HepG2 (cell line): ENCODE measurements at regions of chr5 and their contacts with region 1.

Region 1: GRCh38 chr5:170633235-170634081 is 129.6 kb downstream of the KCNIP1 start:
- DNase-seq: peak; percentile 27
- ATAC-seq: peak; percentile 14; the same call in 2 of the 3 replicates
- H3K4me3 ChIP-seq: no peak overlapping the region
- H3K27ac ChIP-seq: no peak overlapping the region
- H3K4me1 ChIP-seq: peaks cover 11% of the 10 kb centered on the region; the same call in 1 of the 2 replicates
- H3K27me3 ChIP-seq: peaks cover 2 to 4% of the 10 kb centered on the region in 2 experiments; a peak in 2 of 5 replicates
- CTCF ChIP-seq: no peak
- EP300 ChIP-seq: no peak
- POLR2A ChIP-seq: no peak
- RAD21 ChIP-seq: no peak

Region 2: GRCh38 chr5:170434966-170435605 is 198.4 kb before region 1 on chr5:
- CTCF ChIA-PET with region 1: interaction called, 12 read pairs
- POLR2A ChIA-PET with region 1: no interaction called
- in situ Hi-C with region 1: no loop called
- intact Hi-C with region 1: no loop called
- DNase-seq: peak; percentile 11
- ATAC-seq: peak; percentile 92
- H3K4me3 ChIP-seq: no peak overlapping the region
- H3K27ac ChIP-seq: no peak overlapping the region
- H3K4me1 ChIP-seq: no peaks in the 10 kb centered on the region
- H3K27me3 ChIP-seq: peaks cover 0 to 37% of the 10 kb centered on the region in 2 experiments; a peak in 4 of 5 replicates
- CTCF ChIP-seq: peak; percentile 87
- EP300 ChIP-seq: no peak
- POLR2A ChIP-seq: no peak
- RAD21 ChIP-seq: peak; percentile 71

Region 3: DNA sequence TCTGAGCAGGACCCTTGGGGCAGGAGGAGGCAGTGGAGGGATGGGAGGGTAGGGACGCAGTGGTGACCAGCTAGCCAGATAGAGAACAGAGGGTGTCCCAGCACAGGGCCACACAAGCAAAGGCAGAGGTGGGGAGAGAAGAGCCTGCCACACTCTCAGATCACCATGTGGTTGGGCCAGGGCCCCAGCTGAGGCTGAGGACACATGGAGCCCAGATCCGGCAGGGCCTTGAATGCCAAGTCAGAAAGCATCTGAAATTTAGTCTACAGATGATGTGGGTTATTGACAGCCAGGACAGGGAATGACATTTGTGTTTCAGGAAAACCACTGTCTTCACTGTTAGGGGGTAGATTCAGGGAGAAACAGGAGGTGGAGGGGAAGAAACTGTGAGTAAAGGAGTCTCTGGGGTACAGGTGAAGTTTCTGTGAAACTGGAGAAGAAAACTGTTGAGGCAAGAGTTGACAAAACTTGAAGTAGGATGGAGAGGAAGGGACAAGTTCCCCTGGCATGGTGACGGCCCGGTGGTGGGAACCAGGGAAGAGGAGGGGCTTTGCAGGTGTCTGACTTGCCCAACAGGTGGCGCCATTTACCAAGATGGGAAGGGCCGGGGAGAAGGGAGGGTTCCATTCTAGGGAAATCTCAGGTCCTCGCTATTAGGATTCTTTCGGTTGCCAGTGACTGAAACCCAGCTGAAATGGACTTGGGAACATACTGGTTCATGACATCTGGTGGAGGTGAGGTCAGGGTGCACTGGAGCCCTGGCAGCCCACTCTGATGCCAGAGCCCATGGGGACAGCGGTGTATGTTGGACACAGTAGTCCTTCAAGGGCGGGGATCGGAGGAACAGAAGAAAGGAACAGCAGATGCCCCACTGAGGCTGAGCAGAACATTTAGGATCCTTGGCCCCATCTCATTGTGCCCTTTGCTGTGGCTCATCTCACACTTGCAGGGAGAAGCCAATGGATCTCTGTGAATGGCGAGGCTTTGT is 29.6 kb before region 1 on chr5:
- CTCF ChIA-PET with region 1: interaction called, 9 read pairs
- POLR2A ChIA-PET with region 1: no interaction called
- in situ Hi-C with region 1: no loop called
- intact Hi-C with region 1: loop called (anchors 1 kb)
- DNase-seq: peak; percentile 46
- ATAC-seq: peak; percentile 91
- H3K4me3 ChIP-seq: no peak overlapping the region
- H3K27ac ChIP-seq: no peak overlapping the region
- H3K4me1 ChIP-seq: no peaks in the 10 kb centered on the region
- H3K27me3 ChIP-seq: peaks cover 3 to 49% of the 10 kb centered on the region in 2 experiments; a peak in 4 of 5 replicates
- CTCF ChIP-seq: peak; percentile 65
- EP300 ChIP-seq: no peak
- POLR2A ChIP-seq: no peak
- RAD21 ChIP-seq: no peak

Region 4: DNA sequence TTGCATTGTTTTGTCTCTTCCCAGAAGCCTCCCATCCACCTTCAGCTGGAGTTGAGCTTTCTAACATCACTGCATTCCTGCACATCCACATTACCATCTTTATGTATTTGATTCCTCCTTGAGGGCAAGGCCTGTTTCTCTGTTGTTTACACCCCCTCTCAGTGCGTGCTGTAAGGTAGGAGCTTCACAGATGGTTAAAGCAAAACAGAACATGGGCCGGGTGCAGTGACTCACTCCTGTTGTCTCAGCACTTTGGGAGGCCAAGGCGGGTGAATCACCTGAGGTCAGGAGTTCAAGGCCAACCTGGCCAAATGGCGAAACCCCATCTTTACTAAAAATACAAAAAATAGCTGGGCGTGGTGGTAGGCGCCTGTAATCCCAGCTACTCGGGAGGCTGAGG is 18.7 kb before region 1 on chr5:
- CTCF ChIA-PET with region 1: no interaction called
- POLR2A ChIA-PET with region 1: no interaction called
- in situ Hi-C with region 1: no loop called
- intact Hi-C with region 1: loop called (anchors 1 kb)
- DNase-seq: peak; percentile 25
- ATAC-seq: no peak
- H3K4me3 ChIP-seq: no peak overlapping the region
- H3K27ac ChIP-seq: no peak overlapping the region
- H3K4me1 ChIP-seq: no peaks in the 10 kb centered on the region
- H3K27me3 ChIP-seq: peaks cover 0 to 10% of the 10 kb centered on the region in 2 experiments; a peak in 1 of 5 replicates
- CTCF ChIP-seq: no peak
- EP300 ChIP-seq: no peak
- POLR2A ChIP-seq: no peak
- RAD21 ChIP-seq: no peak